Right cardiac atrium (tissue), 5 donors: ENCODE measurements at regions of chr9 and their contacts with region 1.

Region 1: DNA sequence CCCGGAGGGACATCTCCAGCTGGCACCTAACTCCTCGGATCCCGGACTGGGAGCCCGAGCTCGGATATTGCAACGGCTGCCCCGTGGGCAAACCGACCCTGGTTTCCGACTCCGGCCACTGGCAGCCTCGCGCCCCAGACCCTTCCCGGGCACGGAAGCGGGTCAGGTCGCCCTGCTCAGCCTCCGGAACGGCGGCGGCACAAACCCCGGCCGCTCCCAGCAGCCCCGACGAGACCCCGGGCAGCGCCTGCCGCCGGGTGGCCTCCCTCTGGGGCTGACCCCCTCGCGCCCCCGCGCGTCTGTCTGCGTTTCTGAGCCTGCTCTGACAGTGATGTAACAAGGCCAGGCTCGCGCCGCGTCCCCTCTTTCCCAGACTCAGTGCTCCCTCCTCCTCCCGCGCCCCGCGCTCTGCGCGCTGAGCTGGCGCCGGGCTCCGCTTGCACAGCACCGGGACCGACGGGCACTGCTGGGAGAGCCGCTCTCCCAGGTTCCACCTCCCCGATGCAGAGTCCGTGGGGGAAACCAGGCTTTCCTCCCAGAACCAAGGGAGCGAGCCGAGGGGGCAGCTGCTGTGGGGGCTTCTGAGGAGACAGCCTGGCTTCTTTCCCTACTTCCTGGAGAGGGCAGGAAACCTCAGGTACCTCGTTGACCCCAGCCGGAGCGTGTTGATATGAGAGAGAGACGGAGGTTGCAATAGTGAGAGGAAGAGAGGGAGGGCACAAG is at the start of gene TMEM215:
- DNase-seq: peak in 2 of 3 donors; percentile 46 to 54
- ATAC-seq: peak in 1 of 2 donors; percentile 14
- H3K4me3 ChIP-seq: peak within 1 kb of the TSS; percentile 9
- H3K27ac ChIP-seq: no peak within 1 kb of the TSS
- H3K4me1 ChIP-seq: no peaks in the 10 kb centered on the region
- H3K27me3 ChIP-seq: no peaks in the 10 kb centered on the region
- total RNA-seq, gene TMEM215: 0.11 to 0.29 TPM in 2 of 4 donors, not detected in the others

Region 2: DNA sequence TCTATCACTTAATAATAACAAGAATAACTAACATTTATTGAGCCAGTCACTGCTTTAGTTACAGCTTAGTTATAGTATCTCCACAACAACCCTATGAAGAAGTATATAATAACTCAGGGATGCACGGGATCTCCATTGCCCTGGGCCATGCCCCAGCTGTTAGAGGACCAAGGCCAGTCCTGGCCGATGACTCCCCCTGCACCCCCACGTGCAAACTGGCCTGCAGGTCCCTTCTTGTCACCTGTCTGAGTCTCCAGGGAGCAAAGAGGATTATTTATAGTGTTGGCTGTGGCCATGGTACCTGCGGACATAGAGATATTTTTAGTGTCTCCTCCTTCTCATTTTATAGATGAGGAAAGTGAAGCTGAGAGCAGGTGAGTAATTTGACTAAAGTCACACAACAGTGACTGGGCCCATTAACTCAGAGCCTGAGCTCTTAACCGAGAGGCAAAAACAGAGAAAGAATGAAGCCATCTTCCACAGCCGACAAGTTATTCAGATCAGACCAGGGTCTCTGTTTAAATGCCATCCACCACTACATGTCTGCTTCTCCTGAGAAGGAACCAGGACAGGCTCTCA is 94.4 kb after region 1 on chr9:
- intact Hi-C with region 1: loop called in 1 of 4 experiments (anchors 10 kb)
- DNase-seq: no peak
- ATAC-seq: no peak
- H3K4me3 ChIP-seq: no peak overlapping the region
- H3K27ac ChIP-seq: no peak overlapping the region
- H3K4me1 ChIP-seq: no peaks in the 10 kb centered on the region
- H3K27me3 ChIP-seq: no peaks in the 10 kb centered on the region